Colonic mucosa (tissue), 4 donors: ENCODE measurements at regions of chr13 and their contacts with region 1.

Region 1: DNA sequence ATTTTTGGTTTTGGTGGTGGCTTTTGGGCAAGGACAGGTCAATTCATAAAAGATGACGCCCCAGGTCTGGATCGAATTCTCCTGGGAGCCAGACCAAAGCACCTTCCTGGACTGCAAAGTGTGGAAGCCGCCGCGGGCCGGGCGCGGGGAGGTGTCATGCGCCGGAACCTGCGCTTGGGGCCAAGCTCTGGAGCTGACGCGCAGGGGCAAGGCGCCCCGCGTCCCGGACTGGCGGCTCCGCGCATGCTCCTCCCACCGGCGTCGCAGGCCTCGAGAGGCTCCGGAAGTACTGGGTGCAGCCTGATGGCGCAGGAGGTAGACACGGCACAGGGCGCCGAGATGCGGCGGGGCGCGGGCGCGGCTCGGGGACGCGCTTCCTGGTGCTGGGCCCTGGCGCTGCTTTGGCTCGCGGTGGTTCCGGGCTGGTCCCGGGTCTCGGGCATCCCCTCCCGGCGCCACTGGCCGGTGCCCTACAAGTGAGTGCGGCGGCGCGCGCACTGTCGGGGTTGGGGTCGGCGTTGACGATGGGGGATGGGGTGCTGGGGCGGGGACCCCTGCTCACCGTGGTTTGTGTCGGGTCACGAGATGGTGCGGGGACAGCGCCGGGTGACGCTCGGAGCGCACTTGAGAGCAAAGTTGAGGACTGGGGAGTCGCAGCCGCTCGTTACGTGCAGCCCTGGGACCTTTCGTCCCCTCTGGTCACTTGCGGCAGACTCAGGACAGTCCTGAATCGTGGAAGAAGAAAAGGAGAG is at the start of gene CLN5:
- DNase-seq: peak; percentile 93
- H3K4me3 ChIP-seq: peak within 1 kb of the TSS; percentile 81
- H3K27ac ChIP-seq: peak within 1 kb of the TSS; percentile 91
- H3K4me1 ChIP-seq: no peaks in the 10 kb centered on the region
- H3K27me3 ChIP-seq: no peaks in the 10 kb centered on the region
- CTCF ChIP-seq: no peak
- total RNA-seq, gene CLN5: 21.8 to 26.5 TPM

Region 2: DNA sequence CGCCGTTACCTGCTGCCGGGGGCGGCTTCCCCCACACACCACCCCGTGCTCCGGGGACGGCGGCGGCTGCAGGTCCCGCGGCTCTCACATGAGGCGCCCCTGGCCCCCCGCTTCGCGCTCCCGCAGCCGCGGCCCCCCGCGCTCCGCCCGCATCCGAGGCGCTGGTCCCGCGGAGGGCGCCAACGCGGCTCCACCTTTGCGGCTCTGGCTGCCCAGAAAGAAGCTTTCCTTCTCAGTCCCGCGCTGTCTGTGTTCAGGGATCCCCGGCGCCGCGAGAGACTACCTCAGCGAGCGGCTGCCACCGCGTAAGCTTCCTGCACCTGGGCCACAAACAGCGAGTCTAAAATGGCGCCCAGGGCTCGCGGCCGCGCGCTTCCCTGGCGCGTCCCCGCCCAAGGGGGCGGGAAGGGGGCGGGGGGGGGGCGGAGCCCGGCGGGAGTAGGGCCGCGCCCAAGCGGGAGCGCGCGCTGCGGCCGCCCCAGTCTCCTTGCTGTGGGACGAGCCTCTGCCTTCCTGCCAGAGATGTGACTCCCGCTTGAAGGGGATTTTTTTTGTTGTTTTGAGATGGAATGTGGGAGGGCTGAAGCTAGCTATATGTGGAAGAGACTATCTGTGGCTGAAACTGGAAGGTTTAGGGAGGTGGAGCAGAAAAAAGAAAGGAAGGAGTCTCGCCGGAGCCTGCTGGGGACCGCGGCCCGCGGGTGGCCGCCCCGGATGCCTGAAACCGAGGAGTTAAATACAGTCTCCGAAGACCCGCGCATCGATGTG is 35.0 kb after region 1 on chr13 and contains the start of gene FBXL3:
- intact Hi-C with region 1: loop called (anchors 5 kb)
- DNase-seq: peak; percentile 83
- H3K4me3 ChIP-seq: peak within 1 kb of the TSS; percentile 86
- H3K27ac ChIP-seq: peak within 1 kb of the TSS; percentile 100
- H3K4me1 ChIP-seq: peaks cover 13% of the 10 kb centered on the region
- H3K27me3 ChIP-seq: no peaks in the 10 kb centered on the region
- CTCF ChIP-seq: no peak
- total RNA-seq, gene FBXL3: 27.9 to 52.9 TPM